ENCODE measurements at regions of chr2 and their contacts with region 1.

Region 1: DNA sequence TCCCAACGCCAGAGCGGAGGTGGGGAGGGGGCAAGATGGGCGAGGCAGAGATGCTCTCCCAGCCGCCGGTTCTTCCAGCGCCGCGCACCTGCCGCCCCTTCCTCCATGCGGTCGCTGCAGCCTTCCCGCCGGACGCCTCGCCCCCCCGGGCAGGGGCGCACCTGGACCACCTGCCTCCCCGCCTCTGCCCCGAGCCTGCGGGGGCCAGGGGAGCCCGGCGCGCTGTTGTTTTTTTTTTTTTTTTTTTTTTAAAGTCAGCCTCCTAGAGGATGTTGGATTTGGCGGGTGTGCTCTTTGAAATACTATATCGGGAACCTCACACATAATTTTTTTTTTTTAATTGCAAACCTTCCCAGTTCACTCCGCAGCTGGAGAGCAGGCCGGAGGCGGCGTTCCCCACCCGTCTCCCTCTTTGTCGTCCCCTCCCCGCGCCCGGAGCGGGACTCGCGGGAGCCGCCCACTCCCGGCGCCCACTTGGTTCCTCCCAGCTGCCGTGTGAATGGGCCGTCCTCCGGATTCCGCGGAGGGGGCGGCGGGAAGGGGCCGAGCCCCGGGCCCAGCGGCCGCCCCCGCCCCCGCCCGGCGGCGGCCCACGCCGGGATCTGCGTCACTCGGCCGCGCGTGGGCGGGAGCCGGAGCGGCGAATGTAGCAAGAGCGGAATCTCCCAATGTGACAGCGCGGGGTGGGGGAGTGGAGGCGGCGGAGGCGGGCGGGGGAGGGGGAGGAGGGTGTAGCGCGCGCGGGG is 421 bp upstream of the NAB1 start:
- DNase-seq: peak; percentile 83 to 98 (median 86)

Region 2: DNA sequence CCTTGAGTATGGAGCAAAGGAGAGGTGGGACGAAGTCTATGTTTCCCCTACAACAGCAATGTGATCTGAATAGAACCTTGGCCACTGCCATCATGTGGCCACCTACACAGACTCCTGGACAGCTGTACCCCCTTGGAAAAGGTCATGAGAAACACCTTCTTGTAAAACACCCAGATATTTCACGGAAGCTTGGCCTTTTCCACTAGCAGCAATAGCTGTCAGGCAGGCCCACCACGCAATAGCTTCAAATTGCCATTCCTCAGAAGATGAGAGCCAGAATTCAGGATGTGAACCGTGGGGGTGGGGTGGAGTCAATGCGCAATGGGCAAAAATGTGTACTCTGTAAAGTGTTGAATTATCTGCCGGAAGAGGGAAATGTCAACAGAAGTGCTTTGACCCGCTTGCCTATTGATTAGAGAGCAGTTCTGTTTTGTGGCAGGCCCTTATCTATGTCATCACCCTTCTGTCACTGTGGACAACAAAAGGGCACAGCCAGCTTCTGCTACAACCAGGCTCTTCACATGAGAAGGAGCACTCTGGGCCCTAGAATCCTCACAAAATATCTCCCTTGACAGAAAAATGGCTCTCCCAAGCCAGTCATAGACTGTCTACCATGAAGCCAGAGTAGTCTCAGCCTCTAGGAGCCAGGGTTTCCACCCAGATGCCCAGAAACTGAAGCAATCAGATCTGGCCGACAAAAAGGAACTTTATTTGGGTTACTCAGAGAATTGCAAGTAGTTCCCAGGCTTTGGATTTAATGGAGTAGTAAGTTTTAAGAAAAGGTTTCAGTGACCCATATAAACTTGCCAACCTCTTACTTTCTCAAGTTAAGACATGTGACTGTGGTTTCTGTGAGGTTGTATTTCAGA is 295.6 kb before region 1 on chr2:
- intact Hi-C with region 1: no loop called
- DNase-seq: no peak

Region 3: GRCh38 chr2:190534310-190535120 is 113.9 kb before region 1 on chr2 and contains the start of gene NEMP2:
- intact Hi-C with region 1: loop called (anchors 2 kb)
- DNase-seq: peak; percentile 44 to 96 (median 74)

Region 4: GRCh38 chr2:190607014-190607597 is 41.4 kb before region 1 on chr2:
- intact Hi-C with region 1: loop called (anchors 5 kb)
- DNase-seq: no peak

Region 5: GRCh38 chr2:190714958-190715357 is 66.5 kb after region 1 on chr2:
- intact Hi-C with region 1: no loop called
- DNase-seq: no peak

Measured in posterior cingulate gyrus (tissue), 11 donors.